Endothelial cell of umbilical vein (primary cell): ENCODE measurements at regions of chr1 and their contacts with region 1.

Region 1: DNA sequence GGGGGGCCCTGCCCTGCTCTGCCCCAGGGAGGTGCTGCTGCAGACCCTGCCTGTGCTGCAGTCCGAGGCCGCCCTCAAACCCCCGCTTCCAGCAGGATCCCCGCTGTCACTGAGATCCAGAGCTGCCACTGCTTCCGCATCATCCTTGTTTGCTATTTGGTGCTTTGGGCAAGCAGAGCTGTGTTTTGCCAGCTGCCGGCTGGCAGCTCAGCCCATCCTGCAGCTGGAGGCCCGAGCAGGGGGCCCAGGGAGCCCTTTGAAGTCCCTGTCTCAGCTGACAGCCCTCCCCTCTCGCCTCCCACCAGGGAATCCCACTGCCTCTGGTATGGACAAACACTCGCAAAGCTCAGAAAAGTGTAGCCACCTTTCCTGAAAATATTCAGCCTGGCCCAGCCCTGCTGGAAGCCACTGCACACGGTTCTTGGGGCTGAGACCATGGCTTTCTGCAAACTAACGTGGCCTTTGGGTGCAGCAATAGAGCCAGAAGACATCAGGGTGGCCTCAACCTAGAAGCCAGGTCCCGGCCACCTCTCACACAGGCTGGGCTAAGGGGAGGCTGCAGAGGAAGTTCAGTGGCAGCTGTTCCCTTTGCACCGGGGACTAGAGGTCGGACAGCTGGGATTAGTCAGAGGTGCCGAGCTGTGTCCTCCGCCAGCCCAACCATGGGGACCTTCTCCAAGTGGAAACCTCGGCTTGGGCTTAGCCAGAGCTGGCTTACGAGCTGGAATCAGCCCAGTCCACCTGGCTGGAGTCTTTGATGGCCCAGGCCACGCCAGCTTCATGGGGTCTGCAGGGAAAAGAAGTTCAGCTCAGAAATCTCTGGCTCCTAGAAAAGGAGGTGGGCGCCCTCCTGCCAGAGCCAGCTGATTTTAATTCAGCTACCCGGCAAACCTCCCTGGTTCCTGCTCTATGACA is 107.1 kb downstream of the SPSB1 start:
- DNase-seq: peak; percentile 83
- H3K4me3 ChIP-seq: no peak overlapping the region
- H3K27ac ChIP-seq: peak overlapping the region; percentile 98
- H3K4me1 ChIP-seq: peaks cover 59% of the 10 kb centered on the region
- H3K27me3 ChIP-seq: no peaks in the 10 kb centered on the region
- CTCF ChIP-seq: no peak
- POLR2A ChIP-seq: no peak

Region 2: DNA sequence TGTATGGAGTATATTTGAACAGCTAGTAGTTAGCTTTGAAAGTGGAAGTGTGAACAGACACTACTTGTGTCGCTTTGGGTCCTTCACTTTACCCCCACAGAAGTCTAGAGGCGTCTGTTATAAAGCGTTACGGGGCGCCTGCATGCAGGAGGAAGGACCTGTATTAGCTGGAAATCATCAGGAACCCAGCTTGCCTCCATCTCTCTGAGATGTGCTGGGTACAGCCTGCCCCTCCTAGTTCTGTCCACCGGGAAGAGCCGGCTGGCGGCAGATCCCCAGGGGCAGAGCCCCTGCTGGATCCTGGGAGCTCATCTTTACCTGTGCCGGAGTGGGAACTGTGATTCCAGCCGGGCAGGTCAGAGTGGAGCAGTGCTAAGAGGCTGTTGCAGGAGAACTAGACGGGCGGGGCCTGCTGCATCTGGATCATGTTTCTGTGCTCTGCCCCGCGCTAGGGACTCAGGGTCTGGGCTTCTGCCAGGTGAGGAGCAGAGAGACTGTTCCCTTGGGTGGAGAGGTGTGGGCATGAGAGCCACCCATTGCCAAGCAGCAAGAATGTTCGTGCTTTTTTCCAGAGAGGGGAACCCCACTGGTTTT is 129.4 kb before region 1 on chr1:
- CTCF ChIA-PET with region 1: interaction called, 11 read pairs
- POLR2A ChIA-PET with region 1: no interaction called
- dilution Hi-C with region 1: no loop called
- intact Hi-C with region 1: no loop called
- DNase-seq: no peak
- H3K4me3 ChIP-seq: no peak overlapping the region
- H3K27ac ChIP-seq: no peak overlapping the region
- H3K4me1 ChIP-seq: peaks cover 4% of the 10 kb centered on the region
- H3K27me3 ChIP-seq: no peaks in the 10 kb centered on the region
- CTCF ChIP-seq: no peak
- POLR2A ChIP-seq: no peak

Region 3: GRCh38 chr1:9338397-9339246 is 61.1 kb before region 1 on chr1:
- CTCF ChIA-PET with region 1: interaction called, 3 read pairs
- POLR2A ChIA-PET with region 1: no interaction called
- dilution Hi-C with region 1: no loop called
- intact Hi-C with region 1: loop called (anchors 2 kb)
- DNase-seq: peak; percentile 57
- H3K4me3 ChIP-seq: no peak overlapping the region
- H3K27ac ChIP-seq: peak overlapping the region; percentile 68
- H3K4me1 ChIP-seq: peaks cover 23% of the 10 kb centered on the region
- H3K27me3 ChIP-seq: no peaks in the 10 kb centered on the region
- CTCF ChIP-seq: no peak
- POLR2A ChIP-seq: no peak

Region 4: DNA sequence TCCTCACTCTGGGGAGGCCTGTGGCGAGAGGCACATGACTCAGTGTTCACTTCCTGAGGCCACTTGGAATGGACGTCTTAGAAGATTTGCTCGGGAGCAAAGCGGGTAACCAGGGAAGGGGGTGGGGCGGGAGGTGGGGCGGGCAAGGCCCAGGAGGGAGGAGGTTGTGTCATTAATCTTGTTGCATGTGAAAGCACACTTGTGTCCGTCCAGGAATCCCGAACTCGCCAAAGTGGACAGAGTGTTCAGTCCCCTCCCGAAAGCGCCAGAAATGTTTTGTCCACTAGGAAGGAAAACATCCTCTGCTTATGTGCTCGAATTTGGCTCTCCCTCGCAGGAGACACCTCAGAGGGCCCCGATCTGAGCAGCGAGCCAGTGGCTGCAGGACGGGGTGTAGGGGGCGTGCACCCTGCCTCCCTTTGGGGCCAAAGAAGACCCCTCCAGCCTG is 22.9 kb before region 1 on chr1:
- CTCF ChIA-PET with region 1: interaction called, 37 read pairs
- POLR2A ChIA-PET with region 1: interaction called, 3 read pairs
- dilution Hi-C with region 1: no loop called
- intact Hi-C with region 1: loop called (anchors 1 kb)
- DNase-seq: peak; percentile 68
- H3K4me3 ChIP-seq: no peak overlapping the region
- H3K27ac ChIP-seq: peak overlapping the region; percentile 59
- H3K4me1 ChIP-seq: peaks cover 30% of the 10 kb centered on the region
- H3K27me3 ChIP-seq: no peaks in the 10 kb centered on the region
- CTCF ChIP-seq: no peak
- POLR2A ChIP-seq: no peak

Region 5: GRCh38 chr1:9413148-9413876 is 13.5 kb after region 1 on chr1:
- CTCF ChIA-PET with region 1: interaction called, 22 read pairs
- POLR2A ChIA-PET with region 1: interaction called, 6 read pairs
- dilution Hi-C with region 1: no loop called
- intact Hi-C with region 1: loop called (anchors 1 kb)
- DNase-seq: peak; percentile 92
- H3K4me3 ChIP-seq: no peak overlapping the region
- H3K27ac ChIP-seq: peak overlapping the region; percentile 80
- H3K4me1 ChIP-seq: peaks cover 20% of the 10 kb centered on the region
- H3K27me3 ChIP-seq: no peaks in the 10 kb centered on the region
- CTCF ChIP-seq: no peak
- POLR2A ChIP-seq: no peak

Region 6: GRCh38 chr1:9438431-9439073 is 38.8 kb after region 1 on chr1:
- CTCF ChIA-PET with region 1: interaction called, 18 read pairs
- POLR2A ChIA-PET with region 1: interaction called, 10 read pairs
- dilution Hi-C with region 1: no loop called
- intact Hi-C with region 1: loop called (anchors 1 kb)
- DNase-seq: peak; percentile 95
- H3K4me3 ChIP-seq: no peak overlapping the region
- H3K27ac ChIP-seq: peak overlapping the region; percentile 50
- H3K4me1 ChIP-seq: peaks cover 49% of the 10 kb centered on the region
- H3K27me3 ChIP-seq: no peaks in the 10 kb centered on the region
- CTCF ChIP-seq: no peak
- POLR2A ChIP-seq: no peak